Activated CD8-positive, alpha-beta T cell treated with anti-CD3 and anti-CD28 coated beads, Interleukin-2, amount 10 ng/mL, durations not matched to agents 7 days and 5 days (primary cell): ENCODE measurements at regions of chr11 and their contacts with region 1.

Region 1: DNA sequence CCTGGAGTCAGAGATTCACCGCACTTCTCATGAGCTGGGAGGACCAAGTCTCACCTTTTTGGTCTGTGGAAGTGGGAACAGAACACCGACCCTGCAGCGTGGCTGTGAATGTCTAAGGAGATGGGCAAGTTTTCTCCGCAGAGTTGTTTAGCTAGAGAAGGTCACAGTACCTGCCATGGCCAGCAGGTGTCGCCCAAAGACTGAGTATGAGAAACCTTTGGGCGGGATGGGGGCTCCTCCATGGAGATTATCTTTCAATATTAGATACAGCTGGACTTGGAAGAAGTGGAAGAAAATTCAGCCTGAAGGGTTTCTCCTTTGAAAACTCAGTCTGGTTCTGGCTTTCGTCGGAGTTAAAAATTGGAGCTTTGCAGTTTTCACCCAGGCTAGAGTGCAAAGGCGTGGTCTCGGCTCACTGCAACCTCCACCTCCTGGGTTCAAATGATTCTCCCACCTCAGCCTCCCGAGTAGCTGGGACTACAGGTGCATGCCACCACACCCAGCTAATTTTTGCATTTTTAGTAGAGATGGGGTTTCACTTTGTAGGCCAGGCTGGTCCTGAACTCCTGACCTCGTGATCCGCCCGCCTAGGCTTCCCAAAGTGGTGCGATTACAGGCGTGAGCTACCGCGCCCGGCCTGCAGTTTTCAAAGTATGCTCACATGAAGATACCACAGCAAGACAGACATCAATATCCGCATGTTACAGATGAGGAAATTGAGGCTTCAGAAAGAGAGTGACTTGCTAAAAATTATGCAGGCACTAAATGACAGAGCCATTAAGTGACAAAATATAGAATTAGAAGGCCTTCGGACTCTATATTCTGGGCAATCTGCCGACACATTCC is 10.7 kb upstream of the DSCAML1 start:
- DNase-seq: peak; percentile 86
- ATAC-seq: peak; percentile 66
- H3K4me3 Mint-ChIP-seq: no peak overlapping the region
- H3K27ac Mint-ChIP-seq: no peak overlapping the region
- H3K4me1 Mint-ChIP-seq: peaks cover 25% of the 10 kb centered on the region
- H3K27me3 Mint-ChIP-seq: no peaks in the 10 kb centered on the region

Region 2: DNA sequence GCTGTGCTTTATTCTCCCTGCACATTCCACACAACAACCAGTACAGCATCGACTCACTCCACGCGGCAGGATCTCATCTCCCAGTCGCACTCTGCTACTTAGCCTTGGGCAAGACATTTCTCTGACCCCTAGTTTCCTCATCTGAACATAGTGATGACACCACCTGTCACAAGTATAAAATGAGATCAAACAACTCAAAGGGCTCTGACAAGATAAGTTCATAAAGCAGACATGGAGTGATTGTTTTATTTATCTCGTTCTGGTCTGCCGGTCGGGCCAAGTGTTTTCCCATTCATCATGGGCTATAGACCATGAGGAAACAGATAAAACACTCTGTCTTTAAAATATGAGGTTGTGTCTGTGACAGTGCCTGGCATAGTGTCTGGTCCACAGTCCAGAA is 45.7 kb before region 1 on chr11:
- CTCF ChIA-PET with region 1: no interaction called
- POLR2A ChIA-PET with region 1: no interaction called
- DNase-seq: no peak
- ATAC-seq: no peak
- H3K4me3 Mint-ChIP-seq: no peak overlapping the region
- H3K27ac Mint-ChIP-seq: no peak overlapping the region
- H3K4me1 Mint-ChIP-seq: no peaks in the 10 kb centered on the region
- H3K27me3 Mint-ChIP-seq: no peaks in the 10 kb centered on the region

Region 3: DNA sequence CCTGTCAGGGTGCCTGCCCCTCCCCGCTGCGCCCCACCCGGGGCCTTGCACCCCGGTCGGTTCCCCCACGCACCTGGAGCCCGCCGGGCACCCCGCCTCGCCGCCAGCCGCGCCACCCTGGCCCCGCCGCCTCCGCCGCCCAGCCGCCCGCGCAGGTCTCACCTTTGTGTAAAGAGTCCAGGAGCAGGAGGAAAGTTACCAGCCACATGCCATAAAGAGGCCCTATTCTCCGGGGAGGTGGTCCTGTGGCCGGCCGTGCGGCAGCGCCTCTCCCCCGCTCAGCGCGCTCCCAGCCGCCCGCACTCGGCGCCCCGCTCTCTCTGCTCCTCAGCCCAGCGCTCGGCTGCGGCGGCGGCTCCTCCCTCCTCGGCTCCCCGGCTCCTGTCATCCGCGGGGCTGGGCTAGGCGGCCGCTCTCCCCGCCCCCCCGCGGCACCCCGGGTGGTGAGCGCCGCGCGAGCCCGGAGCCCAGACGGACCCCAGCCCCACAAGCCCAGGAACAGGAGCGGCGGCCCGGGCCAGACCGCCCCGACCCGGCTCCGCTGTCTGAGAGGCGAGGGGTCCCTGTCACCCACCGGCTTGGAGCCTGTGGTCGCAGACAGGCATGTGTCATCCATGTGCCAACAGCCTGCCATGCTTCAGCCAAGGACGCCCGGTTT is 10.7 kb before region 1 on chr11 and contains the start of gene DSCAML1:
- CTCF ChIA-PET with region 1: interaction called, 28 read pairs
- POLR2A ChIA-PET with region 1: no interaction called
- DNase-seq: peak; percentile 43
- ATAC-seq: peak; percentile 91
- H3K4me3 Mint-ChIP-seq: no peak within 1 kb of the TSS
- H3K27ac Mint-ChIP-seq: no peak within 1 kb of the TSS
- H3K4me1 Mint-ChIP-seq: peaks cover 4% of the 10 kb centered on the region
- H3K27me3 Mint-ChIP-seq: peaks cover 62% of the 10 kb centered on the region
- total RNA-seq, gene DSCAML1: 0.16 to 0.37 TPM

Region 4: DNA sequence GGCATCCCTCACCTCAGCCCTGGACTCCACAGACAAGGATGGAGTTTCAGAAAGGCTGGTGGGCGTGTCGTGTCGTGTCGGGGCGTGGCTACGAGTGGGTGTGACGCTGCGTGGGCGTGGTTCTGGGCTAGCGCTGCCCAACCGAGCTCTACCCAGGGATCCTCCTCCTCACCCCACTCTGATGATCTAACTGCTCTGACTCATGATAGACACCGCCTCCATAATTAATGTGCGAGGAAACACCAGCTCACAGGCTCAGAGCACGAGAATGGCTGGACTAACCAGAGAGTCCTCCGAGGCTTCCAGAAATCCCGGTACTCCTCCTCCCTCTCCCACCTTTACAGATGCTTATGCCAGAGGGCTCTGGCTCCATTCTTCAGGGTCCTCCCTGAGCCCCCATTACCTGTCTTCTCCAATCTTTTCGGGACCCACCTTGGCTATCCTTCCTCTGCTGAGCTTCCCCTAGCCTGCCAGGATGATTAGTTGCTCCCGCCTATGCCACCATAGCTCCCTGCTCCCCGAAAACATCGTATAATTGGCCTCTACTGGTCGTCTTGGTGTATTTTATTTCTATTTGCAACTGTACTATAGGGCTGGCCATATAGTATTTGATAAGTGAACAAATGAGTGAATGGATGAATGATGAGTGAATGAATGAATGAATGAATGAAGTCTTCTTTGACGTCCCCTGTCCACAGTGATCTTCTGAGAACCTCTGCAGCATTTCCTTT is 99.7 kb after region 1 on chr11:
- CTCF ChIA-PET with region 1: interaction called, 16 read pairs
- POLR2A ChIA-PET with region 1: no interaction called
- DNase-seq: peak; percentile 78
- ATAC-seq: peak; percentile 95
- H3K4me3 Mint-ChIP-seq: peak overlapping the region; percentile 22
- H3K27ac Mint-ChIP-seq: peak overlapping the region; percentile 70
- H3K4me1 Mint-ChIP-seq: peaks cover 20% of the 10 kb centered on the region
- H3K27me3 Mint-ChIP-seq: no peaks in the 10 kb centered on the region

Region 5: GRCh38 chr11:117941163-117941707 is 133.5 kb after region 1 on chr11:
- CTCF ChIA-PET with region 1: interaction called, 124 read pairs
- POLR2A ChIA-PET with region 1: no interaction called
- DNase-seq: peak; percentile 21
- ATAC-seq: peak; percentile 38
- H3K4me3 Mint-ChIP-seq: no peak overlapping the region
- H3K27ac Mint-ChIP-seq: no peak overlapping the region
- H3K4me1 Mint-ChIP-seq: peaks cover 60% of the 10 kb centered on the region
- H3K27me3 Mint-ChIP-seq: no peaks in the 10 kb centered on the region

Region 6: DNA sequence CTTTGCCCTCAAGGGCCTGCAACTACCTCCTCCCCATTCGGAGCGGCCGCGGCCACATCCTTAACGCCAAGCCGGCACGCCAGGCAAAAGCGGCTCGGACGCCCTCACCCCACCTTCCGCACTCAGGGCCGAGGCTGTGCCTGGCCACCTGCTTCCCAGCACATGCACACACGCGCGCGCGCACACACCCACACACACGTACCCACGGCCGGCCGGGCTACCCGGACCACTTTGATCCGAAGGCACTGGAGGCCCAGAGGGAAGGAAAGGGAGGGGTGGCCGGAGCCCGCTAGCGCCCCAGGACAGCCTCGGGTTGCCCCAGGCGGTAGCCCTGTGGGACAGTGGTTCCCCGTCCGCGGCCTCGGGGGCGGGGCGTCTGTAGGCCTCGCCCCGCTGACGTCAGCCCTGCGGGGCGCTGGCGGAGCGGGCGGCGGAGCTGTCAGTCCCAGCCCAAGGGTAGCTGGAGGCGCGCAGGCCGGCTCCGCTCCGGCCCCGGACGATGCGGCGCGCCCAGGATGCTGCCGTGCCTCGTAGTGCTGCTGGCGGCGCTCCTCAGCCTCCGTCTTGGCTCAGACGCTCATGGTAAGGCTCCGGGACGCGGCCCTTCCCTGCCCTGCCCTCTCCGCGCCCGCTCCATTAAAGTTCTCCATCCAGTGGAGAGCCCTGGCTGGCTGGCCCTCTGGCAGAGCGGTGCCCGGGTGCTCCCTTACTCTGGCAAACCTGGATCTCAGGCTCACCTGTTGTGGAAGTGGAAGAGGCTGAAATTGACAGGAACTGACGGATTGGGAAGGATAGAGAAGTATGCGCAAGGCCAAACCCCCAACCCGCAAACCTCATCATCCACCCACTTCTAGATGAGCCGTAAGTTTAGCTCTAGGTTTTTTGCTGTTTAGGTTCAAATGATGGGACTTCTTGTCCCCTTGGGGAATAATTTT is 178.5 kb after region 1 on chr11 and contains the start of gene IL10RA:
- CTCF ChIA-PET with region 1: interaction called, 10 read pairs
- POLR2A ChIA-PET with region 1: interaction called, 4 read pairs
- DNase-seq: peak; percentile 88
- ATAC-seq: peak; percentile 89
- H3K4me3 Mint-ChIP-seq: peak within 1 kb of the TSS; percentile 96
- H3K27ac Mint-ChIP-seq: peak within 1 kb of the TSS; percentile 97
- H3K4me1 Mint-ChIP-seq: peaks cover 70% of the 10 kb centered on the region
- H3K27me3 Mint-ChIP-seq: no peaks in the 10 kb centered on the region
- total RNA-seq, gene IL10RA: 202 to 210 TPM

Region 7: DNA sequence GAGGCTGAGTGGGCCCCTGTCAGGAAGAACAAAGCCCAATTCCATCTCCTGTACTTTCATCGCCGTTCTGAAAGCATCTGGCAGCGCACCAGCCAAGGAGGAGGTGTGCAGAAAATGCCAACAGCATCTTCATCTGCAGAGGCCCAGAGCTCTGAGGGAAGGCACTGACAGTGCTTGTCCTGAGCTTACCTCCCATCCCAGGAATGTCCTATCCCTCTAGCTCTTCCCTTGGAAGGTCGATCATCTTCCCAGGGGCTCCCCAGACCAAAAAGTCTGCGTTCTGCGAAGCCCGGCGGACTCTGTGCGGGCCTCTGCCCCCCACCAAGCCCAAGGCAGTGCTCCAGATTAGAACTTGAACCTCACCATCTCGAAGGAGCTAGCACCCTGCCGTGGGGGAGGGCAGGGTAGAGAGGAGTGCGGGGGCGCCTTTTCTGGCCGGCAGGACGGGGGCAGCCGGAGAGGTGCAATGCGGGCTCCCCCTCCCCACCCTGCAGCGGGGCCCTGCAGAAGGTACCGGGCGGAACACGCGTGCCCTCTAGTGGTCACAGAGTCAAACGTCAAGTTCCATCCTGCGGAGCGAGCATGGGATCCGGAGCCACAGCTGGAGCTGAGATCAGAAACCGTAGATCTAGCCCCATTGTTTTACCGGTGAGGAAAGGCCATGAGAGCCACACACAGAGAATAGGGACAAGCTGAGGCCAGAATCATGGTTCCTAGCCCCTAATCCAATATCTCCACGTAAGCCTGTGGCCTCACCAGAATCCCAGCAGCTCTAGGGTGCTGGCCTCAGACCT is 363.8 kb after region 1 on chr11:
- CTCF ChIA-PET with region 1: interaction called, 15 read pairs
- POLR2A ChIA-PET with region 1: no interaction called
- DNase-seq: peak; percentile 82
- ATAC-seq: peak; percentile 90
- H3K4me3 Mint-ChIP-seq: no peak overlapping the region
- H3K27ac Mint-ChIP-seq: no peak overlapping the region
- H3K4me1 Mint-ChIP-seq: peaks cover 10% of the 10 kb centered on the region
- H3K27me3 Mint-ChIP-seq: peaks cover 16% of the 10 kb centered on the region